Mammary epithelial cell (primary cell): ENCODE measurements at regions of chr13 and their contacts with region 1.

Region 1: GRCh38 chr13:35630551-35631275 is 154.2 kb upstream of the MAB21L1 start:
- DNase-seq: peak; percentile 40
- H3K4me3 ChIP-seq: no peak overlapping the region
- H3K27ac ChIP-seq: no peak overlapping the region
- H3K4me1 ChIP-seq: no peaks in the 10 kb centered on the region
- H3K27me3 ChIP-seq: no peaks in the 10 kb centered on the region
- CTCF ChIP-seq: peak; percentile 75 to 78

Region 2: GRCh38 chr13:35499196-35500060 is 131.3 kb before region 1 on chr13:
- CTCF ChIA-PET with region 1: no interaction called
- dilution Hi-C with region 1: no loop called
- in situ Hi-C with region 1: no loop called
- intact Hi-C with region 1: no loop called
- DNase-seq: no peak
- H3K4me3 ChIP-seq: no peak overlapping the region
- H3K27ac ChIP-seq: no peak overlapping the region
- H3K4me1 ChIP-seq: no peaks in the 10 kb centered on the region
- H3K27me3 ChIP-seq: no peaks in the 10 kb centered on the region
- CTCF ChIP-seq: no peak

Region 3: GRCh38 chr13:35961461-35962220 is 330.9 kb after region 1 on chr13:
- CTCF ChIA-PET with region 1: no interaction called
- dilution Hi-C with region 1: no loop called
- in situ Hi-C with region 1: no loop called
- intact Hi-C with region 1: loop called (anchors 2 kb)
- DNase-seq: no peak
- H3K4me3 ChIP-seq: no peak overlapping the region
- H3K27ac ChIP-seq: no peak overlapping the region
- H3K4me1 ChIP-seq: no peaks in the 10 kb centered on the region
- H3K27me3 ChIP-seq: no peaks in the 10 kb centered on the region
- CTCF ChIP-seq: peak; percentile 8 to 29